ENCODE measurements at regions of chr4 and their contacts with region 1.

Region 1: GRCh38 chr4:114378306-114378903 is 220.2 kb upstream of the UGT8 start:
- DNase-seq: no peak
- H3K4me3 ChIP-seq: no peak overlapping the region
- H3K27ac ChIP-seq: no peak overlapping the region
- H3K4me1 ChIP-seq: peaks cover 0 to 1% (median under 1%) of the 10 kb centered on the region in 4 donors
- H3K27me3 ChIP-seq: no peaks in the 10 kb centered on the region
- CTCF ChIP-seq: peak; percentile 52 to 63 (median 61)
- EP300 ChIP-seq: no peak
- POLR2A ChIP-seq: no peak

Region 2: DNA sequence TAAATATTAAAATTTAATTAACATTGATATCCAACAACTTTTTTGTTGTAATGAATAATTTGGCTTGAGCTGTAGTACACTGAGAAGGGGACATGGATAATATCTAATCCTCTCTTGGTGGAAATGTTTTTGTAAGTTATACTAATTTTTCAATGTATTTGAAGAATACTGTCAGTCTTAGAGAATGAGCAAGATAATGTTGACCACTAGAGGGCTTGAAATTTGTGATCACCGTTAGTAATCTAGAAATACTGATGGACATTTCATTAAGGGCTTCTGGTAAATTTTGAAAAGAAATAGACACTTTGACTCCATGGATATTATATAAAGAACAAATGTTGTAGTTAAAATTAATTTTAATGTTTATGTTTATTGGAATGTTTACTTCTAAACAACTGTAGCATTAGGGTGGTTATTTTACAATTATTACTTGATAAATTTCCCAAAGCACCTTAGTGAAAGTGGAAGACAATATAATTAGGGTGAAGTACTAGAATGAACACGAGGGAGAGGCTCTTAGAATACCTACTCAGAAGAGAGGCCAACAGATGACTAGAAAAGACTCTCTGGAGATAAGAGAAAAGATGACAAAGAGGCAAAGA is 596.9 kb before region 1 on chr4:
- intact Hi-C with region 1: loop called (anchors 5 kb)
- DNase-seq: no peak
- H3K4me3 ChIP-seq: no peak overlapping the region
- H3K27ac ChIP-seq: no peak overlapping the region
- H3K4me1 ChIP-seq: peaks cover 0 to 10% (median 9%) of the 10 kb centered on the region in 4 donors
- H3K27me3 ChIP-seq: no peaks in the 10 kb centered on the region
- CTCF ChIP-seq: peak; percentile 51 to 71 (median 66)
- EP300 ChIP-seq: no peak
- POLR2A ChIP-seq: no peak

Region 3: GRCh38 chr4:113979148-113979904 is 399.1 kb before region 1 on chr4 and contains the start of gene ARSJ:
- intact Hi-C with region 1: loop called (anchors 10 kb)
- DNase-seq: no peak
- H3K4me3 ChIP-seq: peak within 1 kb of the TSS; percentile 68 to 72 (median 70)
- H3K27ac ChIP-seq: peak within 1 kb of the TSS; percentile 89 to 92 (median 90)
- H3K4me1 ChIP-seq: peaks cover 0 to 36% (median 26%) of the 10 kb centered on the region in 4 donors
- H3K27me3 ChIP-seq: no peaks in the 10 kb centered on the region
- CTCF ChIP-seq: peak in 1 of 3 experiments; percentile 13
- EP300 ChIP-seq: no peak
- POLR2A ChIP-seq: no peak
- total RNA-seq, gene ARSJ: 18.1 to 26.0 (median 21.2) TPM

Region 4: GRCh38 chr4:114208574-114209151 is 169.7 kb before region 1 on chr4:
- intact Hi-C with region 1: loop called (anchors 5 kb)
- DNase-seq: no peak
- H3K4me3 ChIP-seq: no peak overlapping the region
- H3K27ac ChIP-seq: no peak overlapping the region
- H3K4me1 ChIP-seq: peaks cover 0 to 11% (median 0%) of the 10 kb centered on the region in 4 donors
- H3K27me3 ChIP-seq: no peaks in the 10 kb centered on the region
- CTCF ChIP-seq: peak in 2 of 3 experiments; percentile 12 to 19
- EP300 ChIP-seq: no peak
- POLR2A ChIP-seq: no peak